CD4-positive, alpha-beta T cell (primary cell): ENCODE measurements at regions of chr14 and their contacts with region 1.

Region 1: GRCh38 chr14:22589096-22589839 is at the start of gene DAD1:
- DNase-seq: peak; percentile 98 to 100 (median 100)
- ATAC-seq: peak; percentile 87
- H3K4me3 ChIP-seq: peak within 1 kb of the TSS; percentile 82
- H3K4me3 Mint-ChIP-seq: peak within 1 kb of the TSS; percentile 96
- H3K27ac ChIP-seq: peak within 1 kb of the TSS; percentile 92 to 96
- H3K27ac Mint-ChIP-seq: peak within 1 kb of the TSS; percentile 98
- H3K4me1 ChIP-seq: peaks cover 39% of the 10 kb centered on the region
- H3K4me1 Mint-ChIP-seq: peaks cover 60% of the 10 kb centered on the region
- H3K27me3 ChIP-seq: no peaks in the 10 kb centered on the region
- H3K27me3 Mint-ChIP-seq: no peaks in the 10 kb centered on the region
- CTCF ChIP-seq: no peak
- total RNA-seq, gene DAD1: 41.8 to 44.1 TPM

Region 2: DNA sequence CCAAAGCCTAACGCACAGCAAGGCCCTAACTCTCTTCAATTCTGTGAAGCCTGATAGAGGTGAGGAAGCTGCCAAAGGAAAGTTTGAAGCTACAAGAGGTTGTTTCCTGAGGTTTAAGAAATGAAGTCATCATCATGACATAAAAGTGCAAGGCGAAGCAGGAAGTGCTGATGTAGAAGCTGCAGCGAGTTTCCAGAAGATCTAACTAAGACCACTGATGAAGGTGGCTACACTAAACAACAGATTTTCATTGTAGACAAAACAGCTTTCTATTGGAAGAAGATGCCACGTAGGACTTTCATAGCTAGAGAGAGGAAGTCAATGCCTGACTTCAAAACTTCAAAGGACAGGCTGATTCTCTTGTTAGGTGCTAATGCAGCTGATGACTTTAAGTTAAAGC is 530.1 kb before region 1 on chr14:
- CTCF ChIA-PET with region 1: no interaction called
- POLR2A ChIA-PET with region 1: no interaction called
- intact Hi-C with region 1: no loop called
- DNase-seq: peak in 1 of 14 experiments; percentile 29
- ATAC-seq: peak; percentile 37
- H3K4me3 ChIP-seq: no peak overlapping the region
- H3K4me3 Mint-ChIP-seq: no peak overlapping the region
- H3K27ac ChIP-seq: no peak overlapping the region
- H3K27ac Mint-ChIP-seq: peak overlapping the region; percentile 39
- H3K4me1 ChIP-seq: no peaks in the 10 kb centered on the region
- H3K4me1 Mint-ChIP-seq: peaks cover 15% of the 10 kb centered on the region
- H3K27me3 ChIP-seq: no peaks in the 10 kb centered on the region
- H3K27me3 Mint-ChIP-seq: no peaks in the 10 kb centered on the region
- CTCF ChIP-seq: no peak

Region 3: GRCh38 chr14:22653012-22653621 is 63.8 kb after region 1 on chr14:
- CTCF ChIA-PET with region 1: interaction called, 12 read pairs
- POLR2A ChIA-PET with region 1: interaction called, 6 read pairs
- intact Hi-C with region 1: loop called in 1 of 2 experiments (anchors 5 kb)
- DNase-seq: peak; percentile 20 to 75 (median 37)
- ATAC-seq: peak; percentile 90
- H3K4me3 ChIP-seq: no peak overlapping the region
- H3K4me3 Mint-ChIP-seq: no peak overlapping the region
- H3K27ac ChIP-seq: no peak overlapping the region
- H3K27ac Mint-ChIP-seq: no peak overlapping the region
- H3K4me1 ChIP-seq: no peaks in the 10 kb centered on the region
- H3K4me1 Mint-ChIP-seq: no peaks in the 10 kb centered on the region
- H3K27me3 ChIP-seq: no peaks in the 10 kb centered on the region
- H3K27me3 Mint-ChIP-seq: no peaks in the 10 kb centered on the region
- CTCF ChIP-seq: peak; percentile 69

Region 4: GRCh38 chr14:22713631-22713950 is 124.3 kb after region 1 on chr14:
- CTCF ChIA-PET with region 1: interaction called, 4 read pairs
- POLR2A ChIA-PET with region 1: no interaction called
- intact Hi-C with region 1: loop called in 1 of 2 experiments (anchors 5 kb)
- DNase-seq: no peak
- ATAC-seq: no peak
- H3K4me3 ChIP-seq: peak overlapping the region; percentile 45
- H3K4me3 Mint-ChIP-seq: peak overlapping the region; percentile 81
- H3K27ac ChIP-seq: no peak overlapping the region
- H3K27ac Mint-ChIP-seq: no peak overlapping the region
- H3K4me1 ChIP-seq: peaks cover 7% of the 10 kb centered on the region
- H3K4me1 Mint-ChIP-seq: peaks cover 15% of the 10 kb centered on the region
- H3K27me3 ChIP-seq: peaks cover 23 to 30% of the 10 kb centered on the region in 2 experiments
- H3K27me3 Mint-ChIP-seq: peaks cover 51% of the 10 kb centered on the region
- CTCF ChIP-seq: no peak

Region 5: DNA sequence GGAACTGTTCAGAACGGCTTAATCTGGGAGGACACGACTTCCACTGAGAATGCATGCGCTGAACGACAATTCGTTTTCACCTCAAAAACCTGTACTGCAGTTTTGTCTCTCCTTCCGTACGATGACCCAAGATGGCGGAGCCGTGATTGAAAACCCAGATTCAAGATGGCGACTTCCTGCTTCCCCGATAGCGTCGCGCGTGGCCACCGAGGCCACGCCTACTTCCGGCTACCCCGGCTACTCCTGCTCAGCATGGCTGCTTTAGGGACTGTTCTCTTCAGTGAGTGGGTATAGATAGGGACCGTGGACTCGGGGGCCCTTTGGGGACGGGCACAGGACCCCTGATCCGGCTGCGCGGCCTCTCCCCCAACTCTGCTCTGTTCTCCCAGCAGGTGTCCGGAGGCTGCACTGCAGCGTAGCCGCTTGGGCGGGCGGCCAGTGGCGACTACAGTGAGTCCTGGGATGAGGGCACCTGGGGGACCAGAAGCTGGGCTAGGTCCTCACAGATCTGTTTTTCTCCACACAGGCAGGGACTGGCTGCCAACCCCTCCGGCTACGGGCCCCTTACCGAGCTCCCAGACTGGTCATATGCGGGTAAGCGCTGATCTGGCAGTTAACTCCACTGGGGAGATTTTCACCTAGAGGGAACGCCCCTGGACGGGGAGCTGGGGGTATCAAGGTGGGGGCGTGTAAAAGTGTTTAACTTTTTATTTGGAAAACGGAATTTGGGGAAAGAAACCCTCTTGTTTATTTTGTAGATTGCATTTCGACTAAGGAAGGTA is 240.6 kb after region 1 on chr14 and contains the start of gene MRPL52:
- CTCF ChIA-PET with region 1: no interaction called
- POLR2A ChIA-PET with region 1: interaction called, 4 read pairs
- intact Hi-C with region 1: loop called in 1 of 2 experiments (anchors 2 kb)
- DNase-seq: peak; percentile 84 to 97 (median 89)
- ATAC-seq: peak; percentile 94
- H3K4me3 ChIP-seq: peak within 1 kb of the TSS; percentile 78
- H3K4me3 Mint-ChIP-seq: peak within 1 kb of the TSS; percentile 85
- H3K27ac ChIP-seq: peak within 1 kb of the TSS; percentile 79 to 89
- H3K27ac Mint-ChIP-seq: peak within 1 kb of the TSS; percentile 89
- H3K4me1 ChIP-seq: peaks cover 22% of the 10 kb centered on the region
- H3K4me1 Mint-ChIP-seq: peaks cover 33% of the 10 kb centered on the region
- H3K27me3 ChIP-seq: peaks cover 0 to 3% of the 10 kb centered on the region in 2 experiments
- H3K27me3 Mint-ChIP-seq: peaks cover 5% of the 10 kb centered on the region
- CTCF ChIP-seq: no peak
- total RNA-seq, gene MRPL52: 27.6 to 29.4 TPM

Region 6: GRCh38 chr14:22918804-22919600 is 329.7 kb after region 1 on chr14 and contains the start of gene RBM23:
- CTCF ChIA-PET with region 1: no interaction called
- POLR2A ChIA-PET with region 1: interaction called, 14 read pairs
- intact Hi-C with region 1: loop called in 1 of 2 experiments (anchors 2 kb)
- DNase-seq: peak; percentile 99 to 100 (median 100)
- ATAC-seq: peak; percentile 84
- H3K4me3 ChIP-seq: peak within 1 kb of the TSS; percentile 74
- H3K4me3 Mint-ChIP-seq: peak within 1 kb of the TSS; percentile 88
- H3K27ac ChIP-seq: peak within 1 kb of the TSS; percentile 99 to 100
- H3K27ac Mint-ChIP-seq: peak within 1 kb of the TSS; percentile 100
- H3K4me1 ChIP-seq: peaks cover 38% of the 10 kb centered on the region
- H3K4me1 Mint-ChIP-seq: peaks cover 50% of the 10 kb centered on the region
- H3K27me3 ChIP-seq: no peaks in the 10 kb centered on the region
- H3K27me3 Mint-ChIP-seq: peaks cover 4% of the 10 kb centered on the region
- CTCF ChIP-seq: no peak
- total RNA-seq, gene RBM23: 87.9 to 111 TPM

Region 7: DNA sequence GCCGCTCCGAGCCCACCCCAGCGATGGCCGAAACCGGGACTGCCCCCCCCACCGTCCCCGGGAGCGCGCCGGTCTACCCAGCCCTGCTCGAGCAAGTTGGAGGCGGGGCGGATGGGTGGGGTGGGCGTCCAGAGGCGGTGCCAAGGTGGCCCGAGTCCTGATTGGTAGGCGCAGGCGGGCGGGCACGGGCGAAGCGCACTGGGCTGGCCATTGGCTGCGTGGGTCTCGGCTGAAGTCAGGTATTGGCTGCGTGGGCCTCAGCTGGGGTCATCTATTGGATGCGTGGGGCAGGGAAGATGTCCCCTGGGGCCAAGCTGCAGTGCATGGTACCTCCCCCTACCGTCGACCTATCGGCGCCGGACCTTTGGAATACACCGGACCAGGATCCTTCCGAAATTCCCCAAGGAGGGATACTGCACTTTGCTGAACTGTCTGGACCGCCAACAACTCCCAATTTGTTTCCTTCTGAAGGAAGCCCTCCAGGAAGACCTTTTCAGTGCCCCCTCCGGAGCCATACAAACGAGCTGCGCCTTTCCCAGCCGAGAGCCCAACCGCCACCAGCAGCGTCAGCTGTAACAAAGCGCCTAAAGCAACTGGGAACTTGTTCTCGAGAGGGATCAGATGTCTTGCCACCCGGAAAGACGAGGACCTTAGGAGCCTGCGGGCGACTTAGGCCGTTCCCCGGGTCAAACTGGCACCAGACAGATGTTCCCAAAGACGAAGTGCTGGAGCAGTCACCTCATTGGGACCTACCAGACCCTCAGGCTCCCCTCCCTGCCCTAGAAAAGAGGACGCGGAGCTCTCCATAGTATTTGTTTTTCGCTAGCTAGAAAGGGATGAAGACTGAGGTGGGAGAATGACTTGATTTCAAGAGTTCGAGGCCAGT is 697.0 kb after region 1 on chr14 and contains the start of gene HOMEZ:
- CTCF ChIA-PET with region 1: no interaction called
- POLR2A ChIA-PET with region 1: no interaction called
- intact Hi-C with region 1: loop called in 1 of 2 experiments (anchors 10 kb)
- DNase-seq: peak; percentile 94 to 98 (median 97)
- ATAC-seq: peak; percentile 97
- H3K4me3 ChIP-seq: peak within 1 kb of the TSS; percentile 81
- H3K4me3 Mint-ChIP-seq: peak within 1 kb of the TSS; percentile 95
- H3K27ac ChIP-seq: peak within 1 kb of the TSS; percentile 79 to 81
- H3K27ac Mint-ChIP-seq: peak within 1 kb of the TSS; percentile 94
- H3K4me1 ChIP-seq: peaks cover 17% of the 10 kb centered on the region
- H3K4me1 Mint-ChIP-seq: peaks cover 32% of the 10 kb centered on the region
- H3K27me3 ChIP-seq: no peaks in the 10 kb centered on the region
- H3K27me3 Mint-ChIP-seq: no peaks in the 10 kb centered on the region
- CTCF ChIP-seq: no peak
- total RNA-seq, gene HOMEZ: 2.0 to 2.8 TPM